ENCODE measurements at regions of chr17 and their contacts with region 1.

Region 1: DNA sequence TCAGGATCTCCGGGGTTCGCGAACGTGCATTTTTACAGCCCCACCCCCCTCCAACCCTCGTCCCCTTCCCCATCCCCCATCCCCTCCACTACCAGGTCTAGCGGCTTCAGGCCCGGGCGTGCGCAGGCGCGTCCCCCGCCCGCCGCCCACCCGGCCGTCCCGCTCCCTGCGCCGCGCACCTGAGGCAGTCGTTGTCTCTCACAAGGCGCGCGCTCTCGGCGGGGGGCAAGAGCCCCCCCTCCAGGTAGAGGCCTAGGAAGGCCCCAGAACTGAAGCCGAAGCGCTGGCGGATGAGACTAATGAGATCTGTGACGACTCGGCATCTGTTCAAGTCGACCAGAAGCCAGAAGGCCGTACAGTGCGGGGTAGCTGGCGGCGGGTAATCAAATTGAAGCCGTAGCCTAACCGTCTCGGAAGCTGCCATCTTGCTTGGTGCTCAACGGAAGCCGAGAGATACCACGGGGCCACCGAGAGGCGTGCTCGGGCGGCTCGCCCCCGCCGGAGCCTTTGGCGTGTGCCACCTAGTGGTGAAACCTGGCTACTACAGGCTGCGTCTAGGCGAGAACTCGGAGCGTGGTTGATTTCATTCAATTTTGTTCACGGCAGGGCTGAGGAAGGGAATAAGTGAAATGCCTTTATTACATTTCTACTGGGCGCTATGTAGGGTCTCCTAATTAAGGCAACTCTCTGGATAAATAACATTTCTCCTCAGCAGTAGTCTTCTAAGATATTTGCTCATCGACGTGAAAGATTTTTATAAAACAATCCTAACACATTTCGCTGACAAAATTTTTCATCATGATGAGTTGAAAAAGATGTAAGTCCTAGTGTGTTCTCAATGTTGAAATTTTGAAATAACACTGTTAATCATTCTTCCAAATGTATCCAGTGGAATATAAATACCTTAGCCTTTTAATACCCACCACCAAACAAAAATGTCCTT is at the start of gene COIL:
- DNase-seq: peak; percentile 85 to 99 (median 95)

Region 2: DNA sequence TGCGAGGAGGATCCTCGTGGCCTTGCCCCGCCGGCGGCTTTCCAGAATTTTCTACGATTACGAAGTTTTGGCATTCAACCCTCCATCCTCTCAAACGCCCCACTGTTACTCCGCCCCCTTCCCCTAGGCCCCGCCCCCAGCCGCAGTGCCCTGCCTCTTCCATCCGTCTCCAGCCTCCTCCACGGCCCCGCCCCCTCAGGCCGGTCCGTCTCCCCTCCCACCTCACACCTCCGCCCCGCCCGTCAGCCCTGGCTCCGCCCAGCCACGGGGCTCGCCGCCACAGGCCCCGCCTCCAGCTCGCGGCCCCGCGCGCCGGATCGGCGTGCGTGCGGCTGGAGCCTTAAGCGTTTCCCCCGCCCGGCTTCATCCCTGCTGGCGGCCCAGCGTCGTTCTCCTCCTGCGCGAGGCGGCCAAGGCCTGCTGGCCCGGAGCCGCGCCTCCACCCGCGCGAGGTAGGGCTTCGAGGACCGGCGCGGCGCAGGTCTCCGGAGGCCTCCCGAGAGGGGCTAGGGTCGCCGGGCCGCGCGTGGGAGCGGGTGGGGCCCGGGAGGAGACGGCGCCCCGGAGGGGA is 127.0 kb before region 1 on chr17 and contains the starts of genes C17orf67 and DGKE:
- intact Hi-C with region 1: loop called (anchors 5 kb)
- DNase-seq: peak; percentile 94 to 100 (median 97)